ENCODE measurements at regions of chr1 and their contacts with region 1.

Region 1: GRCh38 chr1:9629445-9630201 is 21.9 kb upstream of the PIK3CD start:
- DNase-seq: peak; percentile 78
- H3K4me3 Mint-ChIP-seq: peak overlapping the region; percentile 94
- H3K27ac Mint-ChIP-seq: peak overlapping the region; percentile 94
- H3K4me1 Mint-ChIP-seq: peaks cover 63% of the 10 kb centered on the region
- H3K27me3 Mint-ChIP-seq: peaks cover 5% of the 10 kb centered on the region

Region 2: GRCh38 chr1:9449106-9449627 is 180.5 kb before region 1 on chr1:
- intact Hi-C with region 1: no loop called
- DNase-seq: no peak
- H3K4me3 Mint-ChIP-seq: no peak overlapping the region
- H3K27ac Mint-ChIP-seq: no peak overlapping the region
- H3K4me1 Mint-ChIP-seq: no peaks in the 10 kb centered on the region
- H3K27me3 Mint-ChIP-seq: peaks cover 12% of the 10 kb centered on the region

Region 3: DNA sequence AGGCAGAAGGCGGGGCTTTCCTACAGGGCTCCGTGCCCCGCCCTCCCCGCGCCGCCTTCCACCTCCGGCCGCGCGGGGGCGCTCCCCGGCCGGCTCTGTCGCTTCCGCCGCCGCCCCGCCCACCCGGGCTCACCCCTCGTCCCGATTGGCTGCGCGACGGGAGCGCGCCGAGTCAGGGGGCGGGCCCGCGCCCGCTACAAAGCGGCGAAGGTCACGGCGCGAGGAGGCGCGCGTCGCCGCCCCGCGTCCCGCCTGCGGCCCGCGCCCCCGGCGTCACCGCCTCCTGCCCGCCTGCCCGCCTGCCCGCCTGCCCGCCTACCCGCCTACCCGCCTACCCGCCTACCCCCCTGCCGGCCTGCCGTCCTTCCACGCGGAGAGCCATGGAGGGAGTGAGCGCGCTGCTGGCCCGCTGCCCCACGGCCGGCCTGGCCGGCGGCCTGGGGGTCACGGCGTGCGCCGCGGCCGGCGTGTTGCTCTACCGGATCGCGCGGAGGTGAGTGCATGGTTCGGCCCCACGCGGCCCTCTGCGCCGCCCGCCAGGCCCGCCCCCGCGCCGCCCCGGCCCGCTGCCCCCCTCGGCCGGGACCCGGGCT is 41.0 kb before region 1 on chr1 and contains the start of gene TMEM201:
- intact Hi-C with region 1: loop called (anchors 2 kb)
- DNase-seq: peak; percentile 94
- H3K4me3 Mint-ChIP-seq: peak within 1 kb of the TSS; percentile 72
- H3K27ac Mint-ChIP-seq: peak within 1 kb of the TSS; percentile 48
- H3K4me1 Mint-ChIP-seq: peaks cover 30% of the 10 kb centered on the region
- H3K27me3 Mint-ChIP-seq: no peaks in the 10 kb centered on the region
- total RNA-seq, gene TMEM201: 36.7 and 38.7 TPM in 2 replicates

Region 4: GRCh38 chr1:9651565-9652378 is 22.1 kb after region 1 on chr1 and contains the start of gene PIK3CD:
- intact Hi-C with region 1: loop called (anchors 1 kb)
- DNase-seq: peak; percentile 31
- H3K4me3 Mint-ChIP-seq: peak within 1 kb of the TSS; percentile 95
- H3K27ac Mint-ChIP-seq: peak within 1 kb of the TSS; percentile 97
- H3K4me1 Mint-ChIP-seq: peaks cover 45% of the 10 kb centered on the region
- H3K27me3 Mint-ChIP-seq: no peaks in the 10 kb centered on the region
- total RNA-seq, gene PIK3CD: 287 and 291 TPM in 2 replicates

Region 5: DNA sequence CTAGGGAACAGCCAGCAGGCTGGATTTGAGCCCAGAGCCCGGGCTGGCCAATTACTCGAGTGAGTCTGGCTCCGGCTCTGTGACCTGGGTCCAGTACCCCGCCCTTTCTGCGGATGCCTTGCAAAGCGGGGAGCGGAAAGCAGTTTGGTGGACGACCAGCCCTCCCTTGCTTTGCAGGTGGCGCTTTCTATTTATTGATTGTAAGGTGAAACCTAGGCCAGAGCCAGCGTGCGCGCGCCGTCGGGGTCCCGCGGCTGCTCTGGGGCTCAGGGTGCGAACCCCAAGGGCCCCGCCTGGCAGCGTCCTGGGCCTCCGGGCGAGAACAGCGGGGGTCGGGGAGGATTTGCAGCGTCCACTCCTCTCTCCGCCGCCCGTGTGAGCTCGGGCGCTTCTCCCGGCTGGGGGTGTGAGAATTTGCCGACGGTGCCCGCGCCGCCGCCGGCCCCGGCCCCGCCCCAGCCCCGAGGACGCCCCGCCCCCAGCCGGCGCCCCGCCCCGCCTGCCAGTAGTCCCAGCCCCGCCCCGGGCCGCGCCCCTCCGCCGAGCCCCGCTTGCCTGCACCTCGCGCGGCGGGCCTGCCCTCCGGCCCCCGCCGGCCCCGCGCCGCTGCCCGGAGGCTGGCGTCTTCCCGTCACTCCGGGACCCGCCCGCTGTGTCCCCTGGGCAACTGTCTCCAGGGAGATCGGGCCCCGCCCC is 59.5 kb after region 1 on chr1:
- intact Hi-C with region 1: loop called (anchors 1 kb)
- DNase-seq: peak; percentile 71
- H3K4me3 Mint-ChIP-seq: peak overlapping the region; percentile 75
- H3K27ac Mint-ChIP-seq: peak overlapping the region; percentile 70
- H3K4me1 Mint-ChIP-seq: peaks cover 59% of the 10 kb centered on the region
- H3K27me3 Mint-ChIP-seq: no peaks in the 10 kb centered on the region

Region 6: DNA sequence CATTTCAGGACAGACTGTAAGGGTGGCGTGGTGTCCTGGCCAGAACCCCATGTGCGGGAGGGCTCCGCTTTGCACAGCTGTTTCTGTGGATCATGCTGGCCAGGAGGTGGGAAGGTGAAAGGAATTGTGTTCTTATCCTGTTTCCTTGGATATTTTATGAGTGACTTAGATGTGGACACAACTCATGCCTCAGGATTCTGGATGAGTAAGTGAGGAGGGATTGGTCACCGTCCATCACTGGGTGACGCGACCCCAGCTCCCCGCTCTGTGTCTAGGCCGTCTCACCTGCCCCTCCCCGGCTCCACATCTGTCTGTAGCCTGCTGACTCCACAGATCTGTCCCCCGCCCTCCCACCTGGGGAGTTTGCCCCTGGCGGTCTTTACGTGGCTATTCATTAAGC is 70.7 kb after region 1 on chr1:
- intact Hi-C with region 1: no loop called
- DNase-seq: no peak
- H3K4me3 Mint-ChIP-seq: no peak overlapping the region
- H3K27ac Mint-ChIP-seq: peak overlapping the region; percentile 48
- H3K4me1 Mint-ChIP-seq: peaks cover 48% of the 10 kb centered on the region
- H3K27me3 Mint-ChIP-seq: no peaks in the 10 kb centered on the region

Region 7: DNA sequence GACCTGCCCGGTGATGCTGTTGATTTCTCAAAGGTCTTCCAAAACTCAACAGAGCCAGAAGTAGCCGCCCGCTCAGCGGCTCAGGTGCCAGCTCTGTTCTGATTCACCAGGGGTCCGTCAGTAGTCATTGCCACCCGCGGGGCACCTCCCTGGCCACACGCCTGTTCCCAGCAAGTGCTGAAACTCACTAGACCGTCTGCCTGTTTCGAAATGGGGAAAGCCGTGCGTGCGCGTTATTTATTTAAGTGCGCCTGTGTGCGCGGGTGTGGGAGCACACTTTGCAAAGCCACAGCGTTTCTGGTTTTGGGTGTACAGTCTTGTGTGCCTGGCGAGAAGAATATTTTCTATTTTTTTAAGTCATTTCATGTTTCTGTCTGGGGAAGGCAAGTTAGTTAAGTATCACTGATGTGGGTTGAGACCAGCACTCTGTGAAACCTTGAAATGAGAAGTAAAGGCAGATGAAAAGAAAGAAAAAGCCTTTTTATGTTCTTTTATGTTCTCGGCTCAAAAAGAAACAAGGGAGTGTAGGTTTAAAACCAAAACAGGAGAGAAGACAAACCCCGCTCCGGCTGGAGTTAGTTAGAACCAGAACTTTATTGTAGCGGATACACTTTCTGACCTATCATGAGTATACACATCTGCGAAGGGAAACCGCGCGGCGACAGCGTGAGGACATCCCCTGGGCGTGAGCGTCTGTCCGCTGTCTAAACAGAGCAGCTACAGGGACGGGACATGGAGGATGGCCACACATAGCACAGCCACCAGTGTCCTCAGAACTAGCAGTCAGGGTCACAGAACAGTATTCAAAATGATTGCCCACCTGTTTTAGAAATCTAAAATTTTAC is 99.0 kb after region 1 on chr1:
- intact Hi-C with region 1: loop called (anchors 1 kb)
- DNase-seq: peak; percentile 54
- H3K4me3 Mint-ChIP-seq: peak overlapping the region; percentile 72
- H3K27ac Mint-ChIP-seq: peak overlapping the region; percentile 83
- H3K4me1 Mint-ChIP-seq: peaks cover 56% of the 10 kb centered on the region
- H3K27me3 Mint-ChIP-seq: no peaks in the 10 kb centered on the region

Region 8: GRCh38 chr1:9867408-9868243 is 238.0 kb after region 1 on chr1:
- intact Hi-C with region 1: loop called (anchors 1 kb)
- DNase-seq: peak; percentile 79
- H3K4me3 Mint-ChIP-seq: no peak overlapping the region
- H3K27ac Mint-ChIP-seq: no peak overlapping the region
- H3K4me1 Mint-ChIP-seq: no peaks in the 10 kb centered on the region
- H3K27me3 Mint-ChIP-seq: no peaks in the 10 kb centered on the region

Region 9: GRCh38 chr1:9942939-9943788 is 313.5 kb after region 1 on chr1 and contains the starts of genes LZIC and NMNAT1:
- intact Hi-C with region 1: loop called (anchors 2 kb)
- DNase-seq: peak; percentile 88
- H3K4me3 Mint-ChIP-seq: peak within 1 kb of the TSS; percentile 100
- H3K27ac Mint-ChIP-seq: peak within 1 kb of the TSS; percentile 97
- H3K4me1 Mint-ChIP-seq: peaks cover 12% of the 10 kb centered on the region
- H3K27me3 Mint-ChIP-seq: no peaks in the 10 kb centered on the region
- total RNA-seq, gene LZIC: 29.9 and 35.9 TPM in 2 replicates
- total RNA-seq, gene NMNAT1: 5.0 and 5.8 TPM in 2 replicates

Measured in activated T-helper 1 cell treated with anti-CD3 and anti-CD28 coated beads, Interleukin-12 subunit alpha, Interleukin-12 subunit beta, Interleukin-2, Interleukin-4 antibody, amounts not matched to agents 30 ng/mL and 10 ng/mL and 1 ng/mL, durations not matched to agents 14 hours and 24 hours and 36 hours (primary cell).